ENCODE measurements at regions of chr18 and their contacts with region 1.

Region 1: GRCh38 chr18:24726727-24727492 is 266.5 kb downstream of the HRH4 start:
- DNase-seq: peak; percentile 51 to 74
- H3K4me3 ChIP-seq: no peak overlapping the region
- H3K27ac ChIP-seq: no peak overlapping the region
- H3K4me1 ChIP-seq: peaks cover 0 to 5% of the 10 kb centered on the region in 2 donors
- H3K27me3 ChIP-seq: no peaks in the 10 kb centered on the region
- CTCF ChIP-seq: peak in 5 of 6 experiments; percentile 64 to 81 (median 73)
- POLR2A ChIP-seq: no peak

Region 2: DNA sequence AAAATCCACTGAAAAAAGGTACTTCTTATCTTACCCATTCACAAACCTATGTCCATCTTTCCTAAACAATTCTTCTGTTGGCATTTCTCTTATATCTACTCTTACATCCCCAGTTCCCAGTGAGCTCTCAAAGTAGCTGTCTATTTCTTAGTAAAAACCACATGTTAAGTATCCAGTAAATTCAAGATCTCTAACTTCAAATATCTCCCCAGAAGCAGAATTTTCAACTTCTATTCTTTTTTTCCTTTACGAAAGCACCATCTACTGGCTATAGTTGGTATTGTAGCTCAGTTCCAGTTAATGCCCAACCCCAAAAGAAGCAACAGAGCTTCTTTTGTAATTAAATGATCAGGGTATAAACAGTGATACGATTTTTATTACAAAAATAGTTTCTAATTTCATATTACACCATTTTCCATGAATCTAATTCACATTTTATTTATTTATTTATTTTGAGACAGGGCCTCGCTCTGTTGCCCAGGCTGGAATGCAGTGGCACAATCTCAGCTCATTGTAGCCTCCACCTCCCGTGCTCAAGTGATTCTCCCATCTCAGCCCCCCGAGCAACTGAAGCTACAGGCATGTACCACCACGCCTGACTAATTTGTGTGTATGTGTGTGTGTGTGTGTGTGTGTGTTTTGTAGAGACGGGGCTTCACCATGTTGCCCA is 238.0 kb before region 1 on chr18:
- intact Hi-C with region 1: loop called (anchors 5 kb)
- DNase-seq: no peak
- H3K4me3 ChIP-seq: no peak overlapping the region
- H3K27ac ChIP-seq: no peak overlapping the region
- H3K4me1 ChIP-seq: peaks cover 3 to 6% of the 10 kb centered on the region in 2 donors
- H3K27me3 ChIP-seq: no peaks in the 10 kb centered on the region
- CTCF ChIP-seq: peak; percentile 53 to 79 (median 76)
- POLR2A ChIP-seq: no peak

Region 3: GRCh38 chr18:24516261-24516660 is 210.6 kb before region 1 on chr18:
- intact Hi-C with region 1: no loop called
- DNase-seq: no peak
- H3K4me3 ChIP-seq: no peak overlapping the region
- H3K27ac ChIP-seq: no peak overlapping the region
- H3K4me1 ChIP-seq: no peaks in the 10 kb centered on the region
- H3K27me3 ChIP-seq: no peaks in the 10 kb centered on the region
- CTCF ChIP-seq: no peak
- POLR2A ChIP-seq: no peak

Region 4: GRCh38 chr18:24600076-24600654 is 126.7 kb before region 1 on chr18:
- intact Hi-C with region 1: loop called (anchors 10 kb)
- DNase-seq: no peak
- H3K4me3 ChIP-seq: no peak overlapping the region
- H3K27ac ChIP-seq: no peak overlapping the region
- H3K4me1 ChIP-seq: no peaks in the 10 kb centered on the region
- H3K27me3 ChIP-seq: no peaks in the 10 kb centered on the region
- CTCF ChIP-seq: peak in 5 of 6 experiments; percentile 10 to 48 (median 41)
- POLR2A ChIP-seq: no peak